Activated naive CD4-positive, alpha-beta T cell treated with anti-CD3 and anti-CD28 coated beads for 36 hours (primary cell): ENCODE measurements at regions of chr9 and their contacts with region 1.

Region 1: GRCh38 chr9:89536145-89536574 is 38.2 kb upstream of the SEMA4D start:
- DNase-seq: peak; percentile 55
- H3K4me3 Mint-ChIP-seq: peak overlapping the region; percentile 44
- H3K27ac Mint-ChIP-seq: peak overlapping the region; percentile 86
- H3K4me1 Mint-ChIP-seq: peaks cover 88% of the 10 kb centered on the region
- H3K27me3 Mint-ChIP-seq: no peaks in the 10 kb centered on the region

Region 2: DNA sequence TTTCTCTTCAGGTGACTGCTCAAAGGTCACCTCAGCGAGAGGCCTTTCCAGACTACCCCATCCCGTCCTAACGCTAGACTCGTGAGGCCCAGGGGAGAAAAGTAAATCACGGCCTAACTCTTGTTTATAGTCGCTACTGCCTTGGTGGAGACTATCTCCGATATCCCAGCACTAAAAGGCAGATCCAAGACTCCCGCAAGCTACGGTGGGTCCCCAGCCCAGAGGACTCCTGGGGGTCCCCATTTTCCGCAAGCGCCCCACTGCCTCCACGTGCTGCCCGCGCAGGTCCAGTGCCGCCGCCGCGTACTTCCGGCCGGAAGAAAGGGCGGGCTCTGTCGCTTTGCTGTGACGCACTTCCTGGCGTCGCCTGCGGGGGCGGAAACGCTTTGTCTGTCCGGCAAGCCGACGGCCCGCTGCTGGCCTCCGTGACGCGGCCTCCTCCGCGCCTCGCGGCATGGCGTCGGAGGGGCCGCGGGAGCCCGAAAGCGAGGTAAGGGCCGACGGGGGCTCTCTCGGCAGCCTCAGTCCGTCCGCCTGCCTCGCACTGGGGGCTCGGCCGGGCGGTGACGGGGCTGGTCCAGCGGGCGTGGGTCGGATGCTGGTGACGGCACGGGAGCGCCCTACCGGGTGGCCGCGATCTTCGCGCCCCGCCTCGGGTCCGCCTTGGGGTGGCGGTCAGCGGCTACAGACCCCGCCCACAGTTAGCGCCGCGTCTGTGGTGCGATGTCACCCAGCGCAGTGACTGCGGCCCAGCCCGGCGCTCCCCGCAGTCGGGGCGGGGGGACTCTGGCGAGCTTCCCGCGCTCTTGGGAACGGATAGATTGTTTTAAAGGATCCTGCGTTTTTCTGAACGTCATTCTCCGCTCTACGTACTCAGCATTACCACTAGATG is 217.8 kb before region 1 on chr9 and contains the start of gene SECISBP2:
- CTCF ChIA-PET with region 1: no interaction called
- intact Hi-C with region 1: loop called (anchors 1 kb)
- DNase-seq: peak; percentile 95
- H3K4me3 Mint-ChIP-seq: peak within 1 kb of the TSS; percentile 89
- H3K27ac Mint-ChIP-seq: peak within 1 kb of the TSS; percentile 93
- H3K4me1 Mint-ChIP-seq: peaks cover 79% of the 10 kb centered on the region
- H3K27me3 Mint-ChIP-seq: no peaks in the 10 kb centered on the region
- total RNA-seq, gene SECISBP2: 42.8 to 45.8 TPM

Region 3: DNA sequence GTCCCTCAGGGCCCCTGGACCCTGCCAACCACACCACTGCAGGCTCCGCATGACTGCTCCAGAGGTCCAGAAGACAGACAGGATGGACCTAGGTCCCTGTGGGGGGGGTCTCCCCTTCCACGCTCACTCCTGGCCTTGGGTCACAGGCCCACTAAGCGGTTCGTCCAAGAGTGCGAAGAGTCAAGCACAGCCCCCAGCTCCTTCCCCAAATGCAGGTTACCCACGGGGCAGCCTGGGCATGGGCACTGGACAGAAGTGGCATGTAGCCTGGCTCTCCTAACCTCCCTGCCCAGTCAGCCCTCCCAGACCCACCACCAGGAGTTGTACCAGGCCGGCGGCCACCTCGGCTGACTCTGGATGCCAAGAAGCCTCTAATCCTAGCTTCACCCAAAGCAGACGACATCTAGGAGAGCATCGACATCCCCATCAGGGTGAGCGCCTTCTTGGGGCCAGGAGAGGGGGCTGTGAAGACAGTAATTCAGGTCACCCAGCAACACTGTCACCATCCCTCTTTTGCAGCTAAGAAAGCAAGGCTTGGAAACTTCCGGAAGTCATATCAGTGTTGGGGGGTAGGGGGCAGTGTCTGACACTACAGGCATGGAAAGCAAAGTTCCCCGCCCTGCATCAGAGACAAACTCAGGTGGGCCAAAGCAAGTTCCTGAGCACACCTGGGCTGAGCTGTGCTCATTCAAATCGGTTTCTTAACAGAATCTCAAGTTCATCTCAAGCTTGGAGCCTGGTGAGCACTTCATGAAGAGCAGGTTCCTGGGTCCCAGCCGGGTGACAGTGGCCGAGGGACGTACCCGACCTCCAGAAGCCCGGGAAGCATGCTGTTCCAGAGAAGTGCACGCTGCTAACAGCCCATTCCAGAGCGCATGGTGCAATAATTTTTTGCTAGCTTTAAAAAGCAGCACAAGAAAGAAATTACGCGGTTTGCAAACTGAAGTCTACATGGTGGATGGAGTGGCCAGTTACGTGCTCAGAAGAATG is 107.0 kb before region 1 on chr9:
- CTCF ChIA-PET with region 1: interaction called, 9 read pairs
- intact Hi-C with region 1: loop called (anchors 1 kb)
- DNase-seq: peak; percentile 79
- H3K4me3 Mint-ChIP-seq: no peak overlapping the region
- H3K27ac Mint-ChIP-seq: peak overlapping the region; percentile 98
- H3K4me1 Mint-ChIP-seq: peaks cover 90% of the 10 kb centered on the region
- H3K27me3 Mint-ChIP-seq: no peaks in the 10 kb centered on the region

Region 4: DNA sequence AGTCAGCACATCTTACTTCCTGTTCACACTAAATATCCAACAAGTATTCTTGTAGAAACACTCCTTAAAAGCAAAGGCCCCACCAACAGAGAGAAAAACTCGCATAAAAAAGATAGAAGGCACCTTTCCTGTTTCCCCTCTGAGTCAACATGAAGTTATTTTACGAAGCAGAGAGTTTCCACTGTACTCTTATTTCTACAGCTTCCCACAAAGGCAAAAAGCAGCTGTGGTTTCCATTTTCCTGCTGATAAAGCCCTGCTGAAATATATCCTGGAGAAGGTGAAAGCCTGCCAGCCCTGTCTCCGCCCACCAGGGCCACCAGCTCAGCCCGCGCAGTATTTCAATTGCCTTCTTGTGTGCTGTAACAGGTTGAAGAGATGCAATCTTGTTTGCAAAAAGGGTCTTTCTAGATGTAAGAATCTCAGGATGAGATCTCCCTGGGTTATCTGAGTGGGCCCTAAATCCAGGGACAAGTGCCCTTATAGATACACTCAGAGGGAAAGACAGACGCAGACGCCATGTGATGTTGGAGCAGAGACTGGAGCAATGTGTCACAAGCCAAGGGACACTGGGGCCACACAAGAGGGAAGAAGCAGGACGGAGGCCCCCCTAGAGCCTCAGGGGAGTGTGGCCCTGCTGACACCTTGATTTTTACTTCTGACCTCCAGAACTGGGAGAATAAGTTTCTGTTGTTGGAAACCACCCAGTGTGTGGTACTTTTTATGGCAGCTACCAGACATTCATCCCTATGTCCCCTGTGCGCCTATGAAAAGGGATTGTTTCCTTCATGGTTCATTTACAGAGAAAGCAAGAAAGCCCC is 58.1 kb before region 1 on chr9:
- CTCF ChIA-PET with region 1: interaction called, 3 read pairs
- intact Hi-C with region 1: loop called (anchors 2 kb)
- DNase-seq: peak; percentile 73
- H3K4me3 Mint-ChIP-seq: peak overlapping the region; percentile 78
- H3K27ac Mint-ChIP-seq: peak overlapping the region; percentile 97
- H3K4me1 Mint-ChIP-seq: peaks cover 89% of the 10 kb centered on the region
- H3K27me3 Mint-ChIP-seq: no peaks in the 10 kb centered on the region

Region 5: DNA sequence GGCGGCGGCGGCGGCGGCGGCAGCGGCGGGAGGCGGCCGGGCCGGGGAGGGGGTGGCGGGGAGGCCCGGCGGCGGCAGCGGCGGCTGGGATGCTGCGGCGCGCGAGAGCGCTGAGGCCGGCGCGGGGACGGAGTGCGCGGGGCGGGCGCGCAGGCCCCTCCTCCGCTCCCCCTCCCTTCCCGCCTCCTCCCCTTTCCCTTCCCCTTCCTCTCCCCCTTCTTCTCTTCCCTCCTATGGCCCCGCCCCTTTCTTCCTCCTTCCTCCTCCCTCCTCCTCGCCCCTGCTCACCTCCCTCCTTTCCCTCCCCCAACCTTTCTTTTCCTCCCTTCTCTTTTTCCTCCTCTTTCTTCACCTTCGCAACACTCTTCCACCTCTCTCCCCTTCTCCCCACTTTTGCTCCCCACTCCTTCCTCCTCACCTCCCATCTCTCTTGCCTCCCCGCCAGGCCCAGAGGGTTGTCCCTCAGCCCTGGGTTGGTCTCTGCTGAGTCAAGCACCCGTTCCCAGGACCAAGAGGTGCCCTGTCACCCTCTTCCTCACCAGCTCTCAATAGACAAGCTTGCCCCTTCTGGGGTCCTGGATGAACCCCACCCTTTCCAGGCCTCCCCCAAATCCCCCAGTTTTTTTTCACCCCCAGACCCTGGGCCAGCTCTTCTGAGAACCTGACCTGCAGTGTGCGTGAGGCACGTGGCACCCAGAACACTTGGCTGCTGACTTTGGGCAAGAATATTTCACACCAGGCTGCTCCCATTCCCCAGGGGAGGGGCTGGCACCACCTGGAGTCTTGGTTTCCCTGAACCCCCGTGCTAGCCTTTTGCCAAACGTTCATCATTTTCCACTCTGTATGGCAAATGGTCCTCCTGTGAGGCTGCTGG is 37.9 kb before region 1 on chr9 and contains the start of gene SEMA4D:
- CTCF ChIA-PET with region 1: interaction called, 5 read pairs
- intact Hi-C with region 1: loop called (anchors 1 kb)
- DNase-seq: peak; percentile 84
- H3K4me3 Mint-ChIP-seq: peak within 1 kb of the TSS; percentile 89
- H3K27ac Mint-ChIP-seq: peak within 1 kb of the TSS; percentile 93
- H3K4me1 Mint-ChIP-seq: peaks cover 73% of the 10 kb centered on the region
- H3K27me3 Mint-ChIP-seq: no peaks in the 10 kb centered on the region
- total RNA-seq, gene SEMA4D: 156 to 160 TPM

Region 6: DNA sequence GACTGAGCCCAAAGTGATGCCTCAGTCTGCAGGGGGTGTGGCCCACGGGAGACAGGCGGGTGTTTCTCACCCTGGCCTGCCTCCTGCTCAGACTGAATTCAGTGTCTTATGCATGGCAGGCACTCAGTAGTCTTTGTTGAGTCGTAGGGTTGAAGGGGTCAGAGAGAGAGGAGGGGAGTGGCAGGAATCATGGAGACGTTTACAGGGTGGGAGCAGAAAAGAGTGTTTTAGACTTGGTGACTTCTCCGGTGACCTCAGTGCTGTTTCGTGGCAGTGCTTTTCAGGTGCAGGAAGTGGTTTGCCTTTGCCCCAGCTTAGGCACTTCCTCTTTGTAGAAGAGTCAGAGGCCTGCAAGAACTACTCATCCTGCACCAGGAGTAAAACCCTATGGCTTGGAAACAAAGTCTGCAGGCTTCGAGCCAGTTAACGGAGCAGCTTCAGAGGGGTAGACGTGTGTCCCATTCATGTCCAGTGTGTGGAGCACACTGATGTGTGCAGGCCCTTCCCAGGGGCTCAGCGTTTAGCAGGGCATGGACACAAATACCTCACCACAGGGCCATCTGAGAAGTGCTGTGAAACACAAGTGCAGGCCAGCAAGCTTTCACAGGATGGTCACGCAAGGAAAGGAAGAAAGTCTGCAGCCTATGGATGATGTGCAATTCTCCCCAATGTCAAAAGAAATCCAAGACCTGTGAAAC is 13.8 kb before region 1 on chr9:
- CTCF ChIA-PET with region 1: interaction called, 8 read pairs
- intact Hi-C with region 1: loop called (anchors 1 kb)
- DNase-seq: peak; percentile 89
- H3K4me3 Mint-ChIP-seq: peak overlapping the region; percentile 58
- H3K27ac Mint-ChIP-seq: peak overlapping the region; percentile 96
- H3K4me1 Mint-ChIP-seq: peaks cover 93% of the 10 kb centered on the region
- H3K27me3 Mint-ChIP-seq: no peaks in the 10 kb centered on the region

Region 7: GRCh38 chr9:89619019-89619418 is 82.9 kb after region 1 on chr9:
- CTCF ChIA-PET with region 1: no interaction called
- intact Hi-C with region 1: no loop called
- DNase-seq: no peak
- H3K4me3 Mint-ChIP-seq: no peak overlapping the region
- H3K27ac Mint-ChIP-seq: no peak overlapping the region
- H3K4me1 Mint-ChIP-seq: no peaks in the 10 kb centered on the region
- H3K27me3 Mint-ChIP-seq: no peaks in the 10 kb centered on the region